Sigmoid colon (tissue), 7 donors: ENCODE measurements at regions of chr4 and their contacts with region 1.

Region 1: DNA sequence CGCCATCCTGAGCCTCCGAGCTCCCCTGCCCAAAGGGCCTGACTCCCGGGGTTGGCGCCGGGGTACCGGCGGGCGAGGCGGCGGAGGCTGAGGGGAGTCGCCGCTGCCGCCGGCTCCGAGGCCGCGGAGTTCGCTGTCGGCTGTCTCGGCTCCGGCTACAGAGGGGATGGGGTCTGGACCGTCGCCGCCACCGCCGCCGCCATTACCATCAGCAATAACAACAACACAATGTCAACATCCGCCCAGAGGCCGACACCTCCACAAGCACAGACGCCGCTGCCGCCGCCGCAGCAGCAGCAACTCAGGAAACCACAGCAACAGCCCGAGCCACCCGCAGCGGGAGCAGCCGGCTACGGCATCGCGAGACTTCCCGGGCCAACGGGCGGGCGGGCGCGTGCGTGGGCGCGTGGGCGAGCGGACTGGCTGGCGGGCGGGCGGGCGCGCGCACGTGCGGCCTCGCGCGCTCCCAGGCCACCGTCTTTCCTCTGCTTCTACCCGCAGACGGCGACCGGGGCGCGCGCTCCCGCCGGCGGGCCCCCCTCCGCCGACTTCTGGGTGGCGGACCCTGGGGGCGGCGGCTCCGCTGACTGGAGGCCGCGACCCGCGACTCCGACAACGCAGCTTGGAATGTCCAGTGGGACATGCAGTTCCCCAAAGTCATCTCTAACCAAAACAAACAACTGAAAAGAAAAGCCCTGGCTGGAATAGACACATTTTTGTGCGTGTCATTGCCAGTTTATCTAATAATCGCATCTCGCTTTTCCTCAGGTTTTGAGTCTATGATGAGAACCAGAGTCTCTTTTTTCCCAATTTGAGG is at the start of gene CHIC2:
- DNase-seq: peak; percentile 97
- H3K4me3 ChIP-seq: peak within 1 kb of the TSS; percentile 94 to 99 (median 96)
- H3K27ac ChIP-seq: peak within 1 kb of the TSS; percentile 87 to 95 (median 92)
- H3K4me1 ChIP-seq: peaks cover 0 to 40% (median 29%) of the 10 kb centered on the region in 4 donors
- H3K27me3 ChIP-seq: no peaks in the 10 kb centered on the region
- CTCF ChIP-seq: no peak
- EP300 ChIP-seq: peak in 2 of 4 donors; percentile 66 to 79
- POLR2A ChIP-seq: peak; percentile 93 to 94
- total RNA-seq, gene CHIC2: 22.8 to 34.6 (median 25.0) TPM

Region 2: DNA sequence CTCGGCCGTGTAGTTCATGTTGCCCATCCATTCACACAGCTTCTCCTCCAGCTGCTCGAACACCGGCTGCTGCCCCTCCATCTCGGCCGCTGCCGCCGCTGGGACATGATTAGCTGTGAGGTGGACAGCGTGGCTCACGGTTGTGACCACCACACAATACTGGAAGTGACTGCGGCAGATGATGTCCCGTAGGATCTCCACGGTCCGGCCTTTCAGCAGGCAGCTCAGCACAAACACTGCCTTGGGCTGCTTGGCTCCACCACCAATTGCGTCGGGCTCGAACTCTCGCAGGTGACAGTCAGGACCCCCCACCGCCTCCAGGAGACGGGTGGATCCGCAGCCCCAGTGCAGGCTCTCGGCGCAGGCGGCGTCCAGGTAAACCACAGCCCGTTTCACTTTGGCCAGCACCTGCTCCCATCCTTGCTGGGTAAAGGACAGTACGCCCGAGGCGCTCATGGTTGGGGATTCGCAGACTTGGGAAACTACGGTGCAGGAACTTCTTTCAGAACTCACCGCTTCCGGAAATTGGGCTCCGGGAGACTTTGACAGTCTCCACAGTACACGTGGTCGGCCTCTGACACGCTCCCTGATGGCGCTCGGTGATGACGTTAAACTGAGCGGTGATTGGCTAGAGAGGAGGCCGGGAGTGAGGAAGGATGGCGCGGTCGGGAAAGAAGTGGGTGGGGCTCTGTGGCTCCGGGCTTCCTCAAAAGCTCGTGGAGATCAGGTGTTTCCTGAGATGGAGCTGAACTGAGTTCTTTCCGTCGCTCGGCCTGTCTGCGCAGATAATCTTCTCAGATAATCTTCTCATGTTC is 698.8 kb before region 1 on chr4 and contains the start of gene SCFD2:
- intact Hi-C with region 1: loop called (anchors 10 kb)
- DNase-seq: peak; percentile 98
- H3K4me3 ChIP-seq: peak within 1 kb of the TSS; percentile 59 to 94 (median 84)
- H3K27ac ChIP-seq: peak within 1 kb of the TSS; percentile 58 to 74 (median 62)
- H3K4me1 ChIP-seq: peaks cover 0 to 37% (median 22%) of the 10 kb centered on the region in 4 donors
- H3K27me3 ChIP-seq: peaks cover 0 to 13% (median 3%) of the 10 kb centered on the region in 3 donors
- CTCF ChIP-seq: no peak
- EP300 ChIP-seq: no peak
- POLR2A ChIP-seq: no peak
- total RNA-seq, gene SCFD2: 10.7 to 16.6 (median 12.2) TPM

Region 3: GRCh38 chr4:53929955-53930798 is 134.3 kb before region 1 on chr4:
- intact Hi-C with region 1: loop called (anchors 5 kb)
- DNase-seq: peak; percentile 82
- H3K4me3 ChIP-seq: no peak overlapping the region
- H3K27ac ChIP-seq: no peak overlapping the region
- H3K4me1 ChIP-seq: peaks cover 0 to 6% (median 0%) of the 10 kb centered on the region in 4 donors
- H3K27me3 ChIP-seq: peaks cover 0 to 3% (median 0%) of the 10 kb centered on the region in 3 donors
- CTCF ChIP-seq: peak; percentile 40 to 78 (median 64)
- EP300 ChIP-seq: no peak
- POLR2A ChIP-seq: no peak

Region 4: GRCh38 chr4:53951414-53951813 is 113.1 kb before region 1 on chr4:
- intact Hi-C with region 1: no loop called
- DNase-seq: no peak
- H3K4me3 ChIP-seq: no peak overlapping the region
- H3K27ac ChIP-seq: no peak overlapping the region
- H3K4me1 ChIP-seq: no peaks in the 10 kb centered on the region
- H3K27me3 ChIP-seq: peaks cover 0 to 5% (median 0%) of the 10 kb centered on the region in 3 donors
- CTCF ChIP-seq: no peak
- EP300 ChIP-seq: no peak
- POLR2A ChIP-seq: no peak

Region 5: DNA sequence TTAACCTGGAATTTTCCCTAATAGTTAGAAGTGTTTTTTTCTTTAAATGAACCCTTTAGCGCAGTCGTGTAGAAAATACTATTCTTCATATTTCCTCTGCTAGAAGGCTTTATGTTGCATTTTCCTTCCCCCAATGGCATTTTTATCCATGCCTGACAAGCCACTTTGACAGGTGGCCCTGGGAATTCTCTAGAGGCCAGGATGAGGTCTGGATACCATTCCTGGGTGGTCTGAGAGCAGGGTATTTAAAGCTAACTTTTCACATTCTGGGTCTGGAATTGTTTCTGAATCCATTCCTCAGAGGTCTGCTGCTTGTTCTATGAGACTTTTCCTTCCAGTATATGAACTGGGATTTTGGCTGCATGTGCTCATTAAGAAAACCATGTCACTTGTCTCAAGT is 133.4 kb after region 1 on chr4:
- intact Hi-C with region 1: loop called (anchors 2 kb)
- DNase-seq: no peak
- H3K4me3 ChIP-seq: peak overlapping the region in 1 of 4 donors; percentile 2
- H3K27ac ChIP-seq: peak overlapping the region in 3 of 4 donors; percentile 25 to 78 (median 74)
- H3K4me1 ChIP-seq: peaks cover 0 to 22% (median 20%) of the 10 kb centered on the region in 4 donors
- H3K27me3 ChIP-seq: no peaks in the 10 kb centered on the region
- CTCF ChIP-seq: no peak
- EP300 ChIP-seq: no peak
- POLR2A ChIP-seq: no peak